B cell (primary cell): ENCODE measurements at regions of chr11 and their contacts with region 1.

Region 1: GRCh38 chr11:60831143-60831500 is 10.8 kb upstream of the CCDC86 start:
- DNase-seq: peak; percentile 85
- ATAC-seq: peak; percentile 86
- H3K4me3 ChIP-seq: peak overlapping the region in 1 of 5 experiments; percentile 3
- H3K4me3 Mint-ChIP-seq: no peak overlapping the region
- H3K27ac ChIP-seq: no peak overlapping the region
- H3K27ac Mint-ChIP-seq: no peak overlapping the region
- H3K4me1 ChIP-seq: peaks cover 0 to 5% of the 10 kb centered on the region in 2 donors
- H3K4me1 Mint-ChIP-seq: peaks cover 5% of the 10 kb centered on the region
- H3K27me3 ChIP-seq: peaks cover 0 to 8% (median 0%) of the 10 kb centered on the region in 4 experiments
- H3K27me3 Mint-ChIP-seq: peaks cover 20% of the 10 kb centered on the region
- CTCF ChIP-seq: peak; percentile 96

Region 2: DNA sequence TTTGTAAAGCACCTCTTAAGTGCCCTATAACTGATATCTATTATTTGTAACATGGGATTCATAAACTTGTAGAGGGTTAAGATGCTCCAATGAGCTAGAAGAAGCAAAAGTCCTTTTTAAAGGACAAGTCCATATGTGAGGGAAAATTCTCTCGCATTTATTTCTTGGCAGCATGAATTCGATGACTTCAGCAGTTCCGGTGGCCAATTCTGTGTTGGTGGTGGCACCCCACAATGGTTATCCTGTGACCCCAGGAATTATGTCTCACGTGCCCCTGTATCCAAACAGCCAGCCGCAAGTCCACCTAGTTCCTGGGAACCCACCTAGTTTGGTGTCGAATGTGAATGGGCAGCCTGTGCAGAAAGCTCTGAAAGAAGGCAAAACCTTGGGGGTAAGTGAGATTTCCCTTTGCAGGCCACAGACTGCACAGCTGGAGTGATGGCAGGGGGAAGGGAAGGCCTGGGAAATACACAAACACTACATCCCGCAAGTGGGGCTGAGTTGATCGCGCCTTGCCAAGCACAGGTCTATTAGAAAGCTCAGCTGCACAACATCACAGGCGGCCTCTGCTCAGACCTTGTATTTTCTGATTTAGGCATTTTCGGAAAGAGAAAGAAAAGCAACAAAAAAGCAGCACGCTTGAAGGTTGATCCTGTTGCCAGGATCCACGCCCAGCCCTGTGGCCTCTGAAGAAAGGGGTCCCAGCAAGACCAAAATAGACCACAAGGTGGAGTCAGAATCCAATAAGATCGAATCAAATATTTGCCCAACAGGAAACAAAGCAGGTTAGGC is 130.2 kb before region 1 on chr11:
- CTCF ChIA-PET with region 1: no interaction called
- POLR2A ChIA-PET with region 1: no interaction called
- intact Hi-C with region 1: no loop called
- DNase-seq: no peak
- ATAC-seq: no peak
- H3K4me3 ChIP-seq: no peak overlapping the region
- H3K4me3 Mint-ChIP-seq: no peak overlapping the region
- H3K27ac ChIP-seq: no peak overlapping the region
- H3K27ac Mint-ChIP-seq: no peak overlapping the region
- H3K4me1 ChIP-seq: no peaks in the 10 kb centered on the region
- H3K4me1 Mint-ChIP-seq: no peaks in the 10 kb centered on the region
- H3K27me3 ChIP-seq: no peaks in the 10 kb centered on the region
- H3K27me3 Mint-ChIP-seq: peaks cover 4% of the 10 kb centered on the region
- CTCF ChIP-seq: no peak

Region 3: DNA sequence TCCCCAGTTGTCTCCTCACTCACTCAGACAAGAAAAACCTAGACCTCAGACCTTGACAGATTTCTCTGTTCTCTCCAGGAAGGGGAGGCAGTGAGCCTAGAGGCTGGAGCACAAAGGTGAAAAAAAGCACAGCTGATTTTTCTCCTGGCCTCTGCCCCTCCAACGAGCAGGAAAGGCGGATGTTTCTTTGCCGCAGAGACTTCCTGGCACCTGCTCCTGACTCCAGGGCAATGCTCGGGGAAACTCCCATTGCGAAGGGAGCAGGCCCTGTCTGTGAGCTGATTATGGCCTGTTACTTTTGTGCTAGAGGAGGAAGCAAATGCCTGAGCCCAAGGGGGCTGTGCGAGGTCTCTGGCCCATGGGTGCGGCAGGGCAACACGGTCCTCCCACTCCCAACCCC is 20.6 kb before region 1 on chr11:
- CTCF ChIA-PET with region 1: no interaction called
- POLR2A ChIA-PET with region 1: no interaction called
- intact Hi-C with region 1: no loop called
- DNase-seq: no peak
- ATAC-seq: no peak
- H3K4me3 ChIP-seq: no peak overlapping the region
- H3K4me3 Mint-ChIP-seq: no peak overlapping the region
- H3K27ac ChIP-seq: no peak overlapping the region
- H3K27ac Mint-ChIP-seq: no peak overlapping the region
- H3K4me1 ChIP-seq: no peaks in the 10 kb centered on the region
- H3K4me1 Mint-ChIP-seq: no peaks in the 10 kb centered on the region
- H3K27me3 ChIP-seq: no peaks in the 10 kb centered on the region
- H3K27me3 Mint-ChIP-seq: peaks cover 36% of the 10 kb centered on the region
- CTCF ChIP-seq: no peak

Region 4: GRCh38 chr11:60841797-60842667 is 10.9 kb after region 1 on chr11 and contains the start of gene CCDC86:
- CTCF ChIA-PET with region 1: interaction called, 27 read pairs
- POLR2A ChIA-PET with region 1: no interaction called
- intact Hi-C with region 1: no loop called
- DNase-seq: peak; percentile 98
- ATAC-seq: peak; percentile 97
- H3K4me3 ChIP-seq: peak within 1 kb of the TSS; percentile 54 to 97 (median 88)
- H3K4me3 Mint-ChIP-seq: peak within 1 kb of the TSS; percentile 93
- H3K27ac ChIP-seq: peak within 1 kb of the TSS; percentile 49 to 81
- H3K27ac Mint-ChIP-seq: peak within 1 kb of the TSS; percentile 93
- H3K4me1 ChIP-seq: peaks cover 32 to 33% of the 10 kb centered on the region in 2 donors
- H3K4me1 Mint-ChIP-seq: peaks cover 48% of the 10 kb centered on the region
- H3K27me3 ChIP-seq: no peaks in the 10 kb centered on the region
- H3K27me3 Mint-ChIP-seq: no peaks in the 10 kb centered on the region
- CTCF ChIP-seq: no peak
- total RNA-seq, gene CCDC86: 9.5 and 10.5 TPM in 2 replicates

Region 5: GRCh38 chr11:60899046-60899936 is 68.2 kb after region 1 on chr11:
- CTCF ChIA-PET with region 1: interaction called, 40 read pairs
- POLR2A ChIA-PET with region 1: interaction called, 4 read pairs
- intact Hi-C with region 1: loop called (anchors 1 kb)
- DNase-seq: peak; percentile 69
- ATAC-seq: peak; percentile 78
- H3K4me3 ChIP-seq: no peak overlapping the region
- H3K4me3 Mint-ChIP-seq: no peak overlapping the region
- H3K27ac ChIP-seq: no peak overlapping the region
- H3K27ac Mint-ChIP-seq: no peak overlapping the region
- H3K4me1 ChIP-seq: peaks cover 0 to 3% of the 10 kb centered on the region in 2 donors
- H3K4me1 Mint-ChIP-seq: peaks cover 10% of the 10 kb centered on the region
- H3K27me3 ChIP-seq: no peaks in the 10 kb centered on the region
- H3K27me3 Mint-ChIP-seq: no peaks in the 10 kb centered on the region
- CTCF ChIP-seq: peak; percentile 97

Region 6: DNA sequence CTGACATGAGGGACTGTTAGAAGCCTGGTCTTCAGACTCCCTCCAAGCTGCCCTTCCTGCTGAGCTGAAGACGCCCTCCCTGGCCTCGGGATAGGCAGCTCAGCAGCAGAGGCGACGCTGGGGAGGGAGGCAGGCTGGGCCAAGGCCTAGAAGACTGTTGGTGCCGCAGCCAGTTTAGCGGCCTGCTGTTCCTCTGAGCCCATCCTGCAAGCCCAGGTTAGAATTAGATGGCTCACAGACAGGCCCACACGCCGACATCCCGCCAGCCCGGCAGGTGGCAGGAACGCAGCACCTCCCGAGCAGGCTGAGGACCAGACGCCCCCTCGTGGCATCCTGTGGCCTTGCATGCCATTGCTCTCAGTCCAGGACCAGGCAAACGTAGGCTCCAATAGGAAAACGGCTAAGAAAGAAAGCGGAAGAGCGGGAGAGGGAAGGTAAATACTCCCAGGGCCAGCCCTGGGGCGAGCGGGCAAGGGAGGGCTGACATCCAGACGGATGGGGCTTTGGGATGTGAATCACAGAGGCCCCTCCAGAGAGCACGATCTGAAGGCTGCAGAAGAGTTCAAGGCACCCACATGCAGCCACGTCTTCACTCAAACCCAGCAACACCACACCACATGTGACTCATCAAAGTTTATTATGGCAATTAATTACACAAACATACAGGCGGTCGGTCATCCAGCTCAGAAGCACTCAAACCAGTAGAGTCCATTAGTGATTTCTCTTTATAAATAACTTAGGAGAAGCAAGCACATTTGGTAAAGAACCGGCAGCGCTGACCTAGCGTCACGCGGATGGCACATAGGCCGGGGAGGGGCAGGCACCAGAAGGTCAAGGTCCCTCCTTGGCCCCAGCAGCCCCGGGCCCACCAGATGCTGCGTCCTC is 298.8 kb after region 1 on chr11:
- CTCF ChIA-PET with region 1: interaction called, 35 read pairs
- POLR2A ChIA-PET with region 1: no interaction called
- intact Hi-C with region 1: loop called (anchors 1 kb)
- DNase-seq: peak; percentile 90
- ATAC-seq: peak; percentile 100
- H3K4me3 ChIP-seq: no peak overlapping the region
- H3K4me3 Mint-ChIP-seq: no peak overlapping the region
- H3K27ac ChIP-seq: no peak overlapping the region
- H3K27ac Mint-ChIP-seq: no peak overlapping the region
- H3K4me1 ChIP-seq: peaks cover 9% of the 10 kb centered on the region in 2 donors
- H3K4me1 Mint-ChIP-seq: peaks cover 4% of the 10 kb centered on the region
- H3K27me3 ChIP-seq: no peaks in the 10 kb centered on the region
- H3K27me3 Mint-ChIP-seq: no peaks in the 10 kb centered on the region
- CTCF ChIP-seq: peak; percentile 100

Region 7: DNA sequence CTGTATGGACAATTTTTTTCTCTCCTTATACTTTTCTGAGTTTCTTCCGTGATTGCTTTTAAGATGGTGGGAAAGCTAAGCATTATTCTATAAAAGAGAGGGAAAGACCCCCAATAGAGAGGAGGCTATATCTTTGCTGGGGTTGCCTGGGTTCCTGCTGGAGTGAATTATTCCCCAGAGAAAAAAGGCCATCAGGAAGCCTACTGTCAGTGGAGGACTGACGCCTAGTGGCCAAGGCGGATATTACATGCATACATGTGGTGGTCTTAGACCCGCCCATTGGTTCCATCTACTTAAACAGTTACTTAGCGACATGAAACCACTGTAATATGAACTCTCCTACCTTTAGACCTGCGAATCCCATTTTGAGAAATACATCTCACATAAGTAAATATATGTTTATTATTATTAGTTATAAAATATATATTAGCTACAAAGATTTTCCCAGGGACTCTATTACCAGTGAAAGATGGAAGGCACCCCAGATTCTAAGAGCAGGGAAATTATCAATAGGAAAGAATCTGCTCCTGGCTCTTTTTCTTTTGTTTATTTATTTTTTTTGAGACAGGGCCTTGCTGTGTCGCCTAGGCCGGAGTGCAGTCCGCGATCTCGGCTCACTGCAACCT is 356.5 kb after region 1 on chr11:
- CTCF ChIA-PET with region 1: interaction called, 80 read pairs
- POLR2A ChIA-PET with region 1: no interaction called
- intact Hi-C with region 1: no loop called
- DNase-seq: peak; percentile 89
- ATAC-seq: peak; percentile 98
- H3K4me3 ChIP-seq: no peak overlapping the region
- H3K4me3 Mint-ChIP-seq: no peak overlapping the region
- H3K27ac ChIP-seq: no peak overlapping the region
- H3K27ac Mint-ChIP-seq: no peak overlapping the region
- H3K4me1 ChIP-seq: no peaks in the 10 kb centered on the region
- H3K4me1 Mint-ChIP-seq: peaks cover 3% of the 10 kb centered on the region
- H3K27me3 ChIP-seq: no peaks in the 10 kb centered on the region
- H3K27me3 Mint-ChIP-seq: peaks cover 5% of the 10 kb centered on the region
- CTCF ChIP-seq: peak; percentile 99

Region 8: DNA sequence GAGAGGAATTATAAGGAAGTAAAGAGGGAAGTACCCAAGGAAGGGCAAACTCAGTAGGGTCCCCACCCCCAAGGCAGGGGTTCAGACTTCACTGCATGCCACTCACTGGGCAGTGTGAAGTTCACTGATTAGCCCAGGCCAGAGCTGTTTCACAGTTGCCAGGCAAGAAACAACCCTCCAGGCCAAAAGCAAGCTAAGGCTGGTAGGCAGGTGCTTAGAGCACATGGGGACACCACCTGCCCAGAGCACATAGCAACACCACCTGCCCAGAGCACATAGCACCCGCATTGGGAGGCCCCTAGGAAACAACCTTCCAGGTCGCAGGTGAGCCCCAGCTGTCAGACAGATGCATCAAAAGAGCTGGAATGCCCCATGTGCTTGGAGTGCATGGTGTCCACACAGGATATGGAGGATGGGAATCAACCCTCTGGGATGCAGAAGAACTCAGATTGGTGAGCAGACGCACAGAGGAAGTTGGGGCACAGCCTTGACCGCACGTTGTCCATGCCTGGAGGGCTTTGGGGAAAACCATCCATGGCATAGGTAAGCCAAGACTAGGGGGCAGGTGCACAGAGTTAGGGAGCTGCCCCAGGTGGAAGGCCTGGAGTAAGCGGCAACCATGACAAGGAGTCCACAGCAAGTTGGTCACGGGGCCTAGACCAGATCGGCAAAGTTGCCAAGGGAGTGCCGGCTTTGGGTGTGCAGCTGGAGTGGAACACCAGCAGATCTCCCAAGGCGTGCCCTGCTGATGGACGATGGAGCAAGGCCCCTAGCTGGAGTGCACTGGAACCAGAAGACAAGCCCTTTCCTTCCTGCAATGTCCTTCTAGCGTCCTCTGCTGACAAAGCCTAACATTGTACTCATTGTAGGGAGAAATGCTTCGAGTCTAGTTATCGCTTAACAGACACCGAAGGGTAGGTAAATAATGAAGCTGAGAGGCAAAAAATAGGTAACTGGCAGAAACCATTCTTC is 553.4 kb after region 1 on chr11:
- CTCF ChIA-PET with region 1: interaction called, 6 read pairs
- POLR2A ChIA-PET with region 1: no interaction called
- intact Hi-C with region 1: loop called (anchors 1 kb)
- DNase-seq: no peak
- ATAC-seq: no peak
- H3K4me3 ChIP-seq: no peak overlapping the region
- H3K4me3 Mint-ChIP-seq: no peak overlapping the region
- H3K27ac ChIP-seq: no peak overlapping the region
- H3K27ac Mint-ChIP-seq: no peak overlapping the region
- H3K4me1 ChIP-seq: peaks cover 6 to 8% of the 10 kb centered on the region in 2 donors
- H3K4me1 Mint-ChIP-seq: peaks cover 8% of the 10 kb centered on the region
- H3K27me3 ChIP-seq: no peaks in the 10 kb centered on the region
- H3K27me3 Mint-ChIP-seq: no peaks in the 10 kb centered on the region
- CTCF ChIP-seq: no peak